ENCODE measurements at regions of chr4 and their contacts with region 1.

Region 1: DNA sequence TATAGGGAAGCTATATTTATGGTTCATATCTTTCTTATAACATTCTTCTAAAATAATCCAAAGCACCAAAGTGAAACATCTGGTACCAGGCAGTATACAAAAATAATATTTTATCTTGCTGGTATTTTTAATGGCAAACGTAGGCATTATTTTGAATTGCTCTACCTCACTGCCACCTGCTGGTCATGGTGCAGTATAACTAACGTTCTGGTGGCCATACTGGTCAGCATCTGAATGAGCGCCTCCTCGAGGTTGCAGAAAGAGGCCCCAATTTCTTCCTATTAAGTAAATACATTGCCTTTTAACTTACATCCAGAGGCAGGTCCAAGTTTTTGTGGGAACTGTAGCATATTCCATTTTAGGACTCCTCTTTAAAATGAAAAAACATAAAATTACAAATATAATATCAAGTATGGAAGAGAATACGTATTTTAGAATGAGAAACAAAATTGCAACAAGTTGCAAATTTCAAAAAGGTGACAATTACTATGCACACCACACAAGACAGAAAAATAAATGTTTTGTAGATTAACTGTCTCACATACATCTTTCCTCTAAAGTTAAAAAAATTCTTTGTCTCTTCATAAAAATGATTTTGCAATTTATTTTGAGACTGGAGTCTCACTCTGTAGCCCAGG is 22.9 kb upstream of the CWH43 start:
- ATAC-seq: peak; percentile 45 to 90 (median 62)
- H3K4me3 ChIP-seq: no peak overlapping the region
- H3K27ac ChIP-seq: no peak overlapping the region
- H3K4me1 ChIP-seq: peaks cover 0 to 3% of the 10 kb centered on the region in 2 donors

Region 2: DNA sequence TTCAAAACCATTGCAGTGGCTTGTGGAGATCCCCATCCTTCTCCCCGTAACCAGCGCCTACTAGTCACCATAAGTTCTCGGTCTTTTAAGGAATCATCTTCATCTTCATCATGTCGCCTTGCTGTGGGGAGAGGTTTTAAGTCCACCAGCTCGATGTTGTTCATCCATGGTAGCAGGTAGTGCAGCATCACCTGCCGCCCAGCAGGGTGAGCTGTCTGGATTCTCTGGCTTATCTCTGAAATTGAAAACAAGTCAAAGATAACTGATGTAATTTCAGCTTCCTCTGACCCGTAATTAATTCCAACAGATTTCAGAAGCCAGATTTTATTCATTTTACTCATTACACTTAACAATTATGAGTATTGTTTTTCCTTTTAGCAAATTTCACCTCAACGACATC is 405.7 kb before region 1 on chr4:
- in situ Hi-C with region 1: loop called in 4 of 9 experiments (anchors 25 kb)
- ATAC-seq: no peak
- H3K4me3 ChIP-seq: no peak overlapping the region
- H3K27ac ChIP-seq: no peak overlapping the region
- H3K4me1 ChIP-seq: no peaks in the 10 kb centered on the region

Region 3: GRCh38 chr4:48578132-48578968 is 384.8 kb before region 1 on chr4:
- in situ Hi-C with region 1: loop called in 8 of 9 experiments (anchors 10 to 25 kb)
- ATAC-seq: peak; percentile 41 to 94 (median 74)
- H3K4me3 ChIP-seq: no peak overlapping the region
- H3K27ac ChIP-seq: no peak overlapping the region
- H3K4me1 ChIP-seq: no peaks in the 10 kb centered on the region

Region 4: DNA sequence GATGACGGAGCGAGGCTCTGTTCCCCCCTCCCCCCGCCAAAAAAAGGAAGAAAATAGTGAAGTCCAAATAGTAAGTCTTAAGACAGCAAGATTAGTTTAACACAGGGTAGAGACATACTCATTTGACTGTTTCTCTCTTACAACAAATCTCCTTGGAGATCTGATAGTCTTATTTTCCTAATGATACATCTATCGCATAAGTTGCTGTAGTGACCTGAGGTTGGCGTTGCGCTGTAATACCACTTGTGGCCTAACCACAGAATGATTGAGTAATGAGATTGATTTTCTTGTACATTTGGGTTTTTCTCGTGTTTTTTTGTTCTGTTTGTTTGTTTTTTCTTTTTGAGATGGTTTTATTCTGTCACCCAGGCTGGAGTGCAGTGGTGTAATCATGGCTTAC is 105.0 kb before region 1 on chr4:
- in situ Hi-C with region 1: loop called in 1 of 9 experiments (anchors 25 kb)
- ATAC-seq: no peak
- H3K4me3 ChIP-seq: no peak overlapping the region
- H3K27ac ChIP-seq: no peak overlapping the region
- H3K4me1 ChIP-seq: no peaks in the 10 kb centered on the region

Measured in motor neuron (in vitro differentiated cells).